ENCODE measurements at regions of chr6 and their contacts with region 1.

Region 1: DNA sequence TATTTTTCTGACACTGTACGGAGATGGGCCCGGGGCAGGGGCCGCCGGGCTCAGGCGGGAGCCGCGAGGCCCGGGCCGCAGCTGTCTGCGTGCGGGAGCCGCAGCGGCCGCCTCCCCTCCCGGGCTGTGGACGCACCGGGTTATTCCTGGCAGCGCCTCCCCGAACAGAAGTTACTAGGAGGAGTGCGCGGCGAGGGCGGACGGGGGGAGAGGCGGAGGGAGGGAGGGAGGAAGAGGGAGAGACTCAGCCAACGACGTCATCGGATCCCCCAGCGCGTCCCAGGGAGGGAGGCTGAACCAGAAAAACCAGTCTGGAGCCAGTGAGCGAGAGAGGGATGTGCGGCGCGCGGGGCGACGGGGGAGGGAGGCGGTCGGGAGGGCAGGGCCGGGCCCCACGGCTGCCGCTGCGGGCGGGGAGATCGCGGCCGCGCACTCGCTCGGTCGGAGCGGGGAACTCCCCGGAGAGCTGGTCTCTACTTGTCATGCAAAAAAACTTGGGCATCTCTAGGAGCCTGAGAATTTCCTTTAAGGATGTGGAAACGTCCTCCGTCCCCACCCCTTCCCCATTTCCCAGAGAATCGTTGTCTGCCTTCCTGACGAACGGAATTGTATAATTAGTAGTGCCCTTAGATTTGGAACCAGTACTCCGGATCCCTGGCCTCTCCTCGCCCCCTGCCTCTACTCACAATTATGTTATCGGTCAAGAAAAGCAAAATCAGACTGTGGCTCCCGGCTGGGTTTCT is 1.4 kb upstream of the HIVEP2 start:
- DNase-seq: peak; percentile 81 to 96 (median 92)
- ATAC-seq: peak; percentile 43 to 47
- H3K4me3 Mint-ChIP-seq: peak overlapping the region; percentile 87 to 100 (median 94)
- H3K27ac Mint-ChIP-seq: peak overlapping the region; percentile 96 to 100 (median 98)
- H3K4me1 Mint-ChIP-seq: peaks cover 22 to 50% (median 38%) of the 10 kb centered on the region in 4 donors
- H3K27me3 Mint-ChIP-seq: peaks cover 0 to 6% (median 0%) of the 10 kb centered on the region in 5 donors

Region 2: DNA sequence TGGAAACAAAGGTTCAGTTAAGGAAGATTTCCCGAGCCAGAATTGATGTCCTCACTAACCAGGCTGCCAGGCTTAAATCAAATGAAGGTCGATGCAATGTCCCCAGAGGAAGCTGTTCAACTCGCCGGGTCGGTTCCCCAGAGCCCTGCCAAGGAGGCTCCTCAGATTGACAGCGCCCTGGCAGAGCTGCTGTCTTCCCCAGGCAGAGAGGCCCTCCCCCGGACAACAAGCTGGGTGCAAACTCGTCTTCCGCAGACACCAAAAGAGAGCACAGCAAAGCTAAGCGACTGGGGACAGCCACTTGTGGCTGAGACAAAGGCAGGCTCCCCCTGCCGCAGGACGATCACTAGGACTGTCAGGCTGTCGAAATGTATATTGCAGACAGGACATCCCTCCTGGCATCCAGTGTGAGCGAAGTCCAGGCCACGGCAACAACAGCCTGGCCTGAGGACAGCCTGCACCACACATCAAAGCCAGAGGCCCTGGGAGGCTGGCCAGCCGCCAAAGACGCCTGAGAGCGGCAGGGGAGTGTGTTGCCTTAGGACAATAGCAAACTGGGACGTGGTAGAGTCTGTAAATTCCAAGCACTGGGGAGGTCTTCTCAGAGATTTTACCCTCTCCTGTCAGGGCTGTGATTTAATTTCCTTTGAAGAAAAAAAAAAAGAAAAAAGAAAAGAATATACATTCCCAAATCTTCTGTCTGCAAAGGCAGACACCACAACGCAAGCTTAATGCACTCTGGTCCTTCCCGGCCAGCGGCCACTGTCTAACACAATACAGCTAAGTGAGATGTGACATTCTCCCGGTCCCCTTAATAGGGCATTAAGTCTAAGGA is 100.5 kb before region 1 on chr6:
- POLR2A ChIA-PET with region 1: interaction called, 17 read pairs
- DNase-seq: peak; percentile 39 to 79 (median 61)
- ATAC-seq: peak; percentile 63 to 78
- H3K4me3 Mint-ChIP-seq: peak overlapping the region; percentile 77 to 90 (median 86)
- H3K27ac Mint-ChIP-seq: peak overlapping the region; percentile 91 to 98 (median 96)
- H3K4me1 Mint-ChIP-seq: peaks cover 40 to 98% (median 89%) of the 10 kb centered on the region in 4 donors
- H3K27me3 Mint-ChIP-seq: no peaks in the 10 kb centered on the region

Region 3: DNA sequence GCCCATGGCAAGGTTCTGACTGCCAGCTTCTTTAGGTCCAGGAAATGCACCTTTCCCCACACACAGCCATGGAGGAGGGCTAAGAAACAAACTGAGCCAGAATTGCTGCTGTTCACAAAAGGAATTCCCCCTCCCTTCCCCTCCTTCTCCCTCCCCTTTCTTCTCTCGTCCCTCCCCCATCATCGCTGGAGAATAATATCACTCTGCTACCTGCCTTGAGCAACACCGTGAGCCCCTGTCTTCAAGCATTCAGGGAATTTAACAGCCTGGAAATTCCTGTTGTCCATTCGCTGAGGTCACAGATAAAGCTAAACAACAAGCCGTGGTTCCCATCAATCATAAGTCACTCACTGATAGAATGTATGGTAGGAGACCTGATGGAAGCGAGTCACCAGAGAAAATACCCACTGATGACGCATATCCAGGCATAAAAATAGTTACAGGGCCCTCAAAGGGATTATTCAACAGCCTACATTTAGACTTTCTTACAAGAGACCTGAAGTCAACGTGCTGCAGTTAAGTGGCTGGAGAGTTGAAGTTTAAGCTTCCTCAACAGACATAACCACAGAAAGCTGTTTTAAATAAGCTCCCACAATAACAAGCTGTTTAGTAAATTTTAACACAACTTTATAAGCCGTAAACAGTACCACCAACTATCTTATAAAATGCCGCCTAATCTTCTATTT is 61.0 kb before region 1 on chr6:
- POLR2A ChIA-PET with region 1: interaction called, 19 read pairs
- DNase-seq: peak; percentile 21 to 85 (median 72)
- ATAC-seq: peak; percentile 86 to 90
- H3K4me3 Mint-ChIP-seq: peak overlapping the region; percentile 78 to 99 (median 97)
- H3K27ac Mint-ChIP-seq: peak overlapping the region; percentile 89 to 100 (median 100)
- H3K4me1 Mint-ChIP-seq: peaks cover 37 to 96% (median 88%) of the 10 kb centered on the region in 4 donors
- H3K27me3 Mint-ChIP-seq: no peaks in the 10 kb centered on the region

Region 4: GRCh38 chr6:142902636-142903053 is 43.7 kb before region 1 on chr6:
- POLR2A ChIA-PET with region 1: interaction called, 23 read pairs
- DNase-seq: peak; percentile 60 to 91 (median 84)
- ATAC-seq: peak; percentile 59 to 66
- H3K4me3 Mint-ChIP-seq: peak overlapping the region in 8 of 10 donors; percentile 59 to 84 (median 82)
- H3K27ac Mint-ChIP-seq: peak overlapping the region in 2 of 10 donors; percentile 95 to 98
- H3K4me1 Mint-ChIP-seq: peaks cover 26 to 69% (median 53%) of the 10 kb centered on the region in 4 donors
- H3K27me3 Mint-ChIP-seq: no peaks in the 10 kb centered on the region